AG04450 (cell line): ENCODE measurements at regions of chr12 and their contacts with region 1.

Region 1: DNA sequence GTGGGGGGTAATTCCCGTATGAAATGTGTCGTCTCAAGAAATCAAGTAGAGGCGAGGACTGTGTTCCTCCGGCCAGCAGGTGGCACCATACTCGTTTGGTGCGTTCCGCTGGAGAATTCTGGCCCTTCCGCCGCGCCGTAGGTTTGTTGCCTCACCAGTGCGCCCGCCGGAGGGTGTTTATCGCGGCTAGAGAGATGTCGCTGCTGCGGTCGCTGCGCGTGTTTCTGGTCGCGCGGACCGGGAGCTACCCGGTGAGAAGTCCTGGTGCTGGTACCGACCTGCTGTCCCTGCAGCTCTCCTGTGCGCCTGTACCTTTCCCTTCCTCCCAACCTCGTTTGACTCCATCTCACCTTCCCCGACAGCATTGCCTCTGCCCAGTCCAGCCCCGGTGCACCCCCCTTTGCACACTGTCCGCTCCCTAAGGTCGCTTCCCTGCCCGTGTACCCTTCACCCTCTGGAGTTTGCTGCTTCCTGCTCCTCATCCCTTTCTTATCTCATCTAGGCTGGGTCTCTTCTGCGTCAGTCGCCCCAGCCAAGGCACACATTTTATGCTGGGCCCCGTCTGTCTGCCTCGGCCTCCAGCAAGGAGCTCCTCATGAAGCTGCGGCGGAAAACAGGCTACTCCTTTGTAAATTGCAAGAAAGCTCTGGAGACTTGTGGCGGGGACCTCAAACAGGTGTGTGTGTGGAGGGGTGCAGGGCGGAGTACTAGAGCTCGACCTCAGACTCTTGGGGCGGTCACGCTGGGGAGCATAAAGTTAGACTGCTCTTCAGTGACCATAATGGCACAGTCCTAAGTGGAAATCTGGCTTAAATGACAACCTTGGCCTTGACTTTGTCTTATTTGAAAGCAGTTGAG is at the start of gene TSFM:
- DNase-seq: peak; percentile 81
- H3K4me3 ChIP-seq: peak within 1 kb of the TSS; percentile 100
- H3K27ac ChIP-seq: no peak within 1 kb of the TSS
- H3K27me3 ChIP-seq: no peaks in the 10 kb centered on the region
- CTCF ChIP-seq: peak; percentile 92
- polyA plus RNA-seq, gene TSFM: 22.3 and 22.8 TPM in 2 replicates

Region 2: GRCh38 chr12:57751788-57752667 is 30.8 kb before region 1 on chr12 and contains the start of gene CDK4:
- CTCF ChIA-PET with region 1: interaction called, 13 read pairs
- POLR2A ChIA-PET with region 1: no interaction called
- DNase-seq: peak; percentile 100
- H3K4me3 ChIP-seq: peak within 1 kb of the TSS; percentile 91
- H3K27ac ChIP-seq: peak within 1 kb of the TSS; percentile 91
- H3K27me3 ChIP-seq: peaks cover 15% of the 10 kb centered on the region
- CTCF ChIP-seq: no peak
- polyA plus RNA-seq, gene CDK4: 251 and 288 TPM in 2 replicates

Region 3: DNA sequence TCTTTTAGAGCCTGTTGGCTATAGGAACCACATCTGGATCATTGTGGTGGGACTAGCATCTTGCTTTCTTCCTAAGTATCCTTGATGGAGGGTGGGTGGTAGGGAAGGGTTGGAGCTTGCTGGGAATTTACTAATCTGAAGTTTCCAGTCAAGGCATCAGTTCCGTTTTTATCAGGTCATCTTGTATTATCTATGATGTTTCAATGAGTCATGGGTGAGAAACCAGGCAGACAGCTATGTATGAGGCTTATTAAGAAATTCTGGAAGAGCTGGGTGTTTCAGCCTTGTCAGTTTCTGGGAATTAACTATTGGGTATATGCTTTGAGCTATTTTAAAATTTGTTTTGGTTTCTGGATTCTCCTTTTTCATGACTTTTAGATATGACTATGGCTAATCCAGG is 11.1 kb after region 1 on chr12:
- CTCF ChIA-PET with region 1: interaction called, 20 read pairs
- POLR2A ChIA-PET with region 1: no interaction called
- DNase-seq: no peak
- H3K4me3 ChIP-seq: no peak overlapping the region
- H3K27ac ChIP-seq: no peak overlapping the region
- H3K27me3 ChIP-seq: no peaks in the 10 kb centered on the region
- CTCF ChIP-seq: no peak

Region 4: DNA sequence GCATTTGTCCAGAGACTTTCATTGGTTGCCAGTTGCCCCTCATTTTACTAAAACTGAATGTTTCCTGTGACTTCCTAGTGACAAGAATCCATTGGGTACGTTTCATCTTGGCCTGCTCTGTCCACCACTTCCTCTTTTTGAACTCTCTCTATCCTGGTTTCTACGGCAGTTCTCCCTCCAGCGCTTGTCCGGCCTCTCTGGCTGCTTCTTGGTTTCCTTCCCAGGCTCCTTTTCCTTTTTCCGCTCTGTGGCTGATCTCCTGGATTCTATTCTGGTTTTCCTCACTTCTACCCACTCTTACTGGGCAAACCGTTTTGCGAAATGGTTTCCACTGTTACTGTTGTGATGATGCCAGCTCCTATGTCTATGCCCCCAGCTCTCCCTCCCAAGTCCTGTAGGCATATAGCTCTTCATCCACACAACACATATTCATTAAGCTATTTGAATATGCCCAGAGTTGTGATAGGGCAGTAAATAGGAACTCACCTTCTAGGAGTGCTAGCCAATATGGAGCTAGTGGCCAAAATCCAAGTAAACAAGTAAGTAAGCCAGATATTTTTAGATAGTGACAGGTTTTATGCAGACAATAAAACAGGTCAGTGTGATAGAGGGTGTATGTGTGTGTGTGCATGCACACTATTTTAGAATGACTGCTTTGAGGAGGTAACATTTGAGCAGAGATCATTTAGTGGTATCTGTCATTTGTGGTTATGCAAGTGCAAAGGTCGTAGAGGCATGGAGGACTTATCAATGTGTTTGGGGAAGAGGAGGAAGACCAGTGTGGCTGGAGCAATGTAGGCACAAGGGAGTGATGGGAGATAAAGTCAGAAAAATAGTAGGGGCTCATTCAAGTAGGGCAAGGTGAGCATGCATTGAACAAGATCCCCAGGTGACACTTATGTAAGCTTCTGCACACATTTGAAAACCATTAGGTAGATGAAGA is 91.6 kb after region 1 on chr12:
- CTCF ChIA-PET with region 1: interaction called, 3 read pairs
- POLR2A ChIA-PET with region 1: interaction called, 11 read pairs
- DNase-seq: no peak
- H3K4me3 ChIP-seq: no peak overlapping the region
- H3K27ac ChIP-seq: no peak overlapping the region
- H3K27me3 ChIP-seq: no peaks in the 10 kb centered on the region
- CTCF ChIP-seq: no peak